Activated naive CD4-positive, alpha-beta T cell treated with anti-CD3 and anti-CD28 coated beads, Interleukin-2, amount 10 ng/mL, durations not matched to agents 7 days and 5 days (primary cell): ENCODE measurements at regions of chr9 and their contacts with region 1.

Region 1: GRCh38 chr9:136482793-136483588 is at the start of gene SEC16A:
- DNase-seq: peak; percentile 100
- H3K4me3 Mint-ChIP-seq: peak within 1 kb of the TSS; percentile 98
- H3K27ac Mint-ChIP-seq: peak within 1 kb of the TSS; percentile 99
- H3K4me1 Mint-ChIP-seq: peaks cover 30% of the 10 kb centered on the region
- H3K27me3 Mint-ChIP-seq: peaks cover 22% of the 10 kb centered on the region

Region 2: GRCh38 chr9:136118320-136119060 is 364.5 kb before region 1 on chr9 and contains the start of gene TMEM250:
- CTCF ChIA-PET with region 1: no interaction called
- DNase-seq: peak; percentile 97
- H3K4me3 Mint-ChIP-seq: peak within 1 kb of the TSS; percentile 79
- H3K27ac Mint-ChIP-seq: peak within 1 kb of the TSS; percentile 89
- H3K4me1 Mint-ChIP-seq: peaks cover 35% of the 10 kb centered on the region
- H3K27me3 Mint-ChIP-seq: peaks cover 11% of the 10 kb centered on the region

Region 3: GRCh38 chr9:136539427-136540421 is 56.7 kb after region 1 on chr9:
- CTCF ChIA-PET with region 1: interaction called, 12 read pairs
- DNase-seq: peak; percentile 98
- H3K4me3 Mint-ChIP-seq: peak overlapping the region; percentile 76
- H3K27ac Mint-ChIP-seq: peak overlapping the region; percentile 100
- H3K4me1 Mint-ChIP-seq: peaks cover 77% of the 10 kb centered on the region
- H3K27me3 Mint-ChIP-seq: no peaks in the 10 kb centered on the region

Region 4: GRCh38 chr9:136631038-136632000 is 148.3 kb after region 1 on chr9:
- CTCF ChIA-PET with region 1: interaction called, 166 read pairs
- DNase-seq: peak; percentile 86
- H3K4me3 Mint-ChIP-seq: no peak overlapping the region
- H3K27ac Mint-ChIP-seq: no peak overlapping the region
- H3K4me1 Mint-ChIP-seq: no peaks in the 10 kb centered on the region
- H3K27me3 Mint-ChIP-seq: peaks cover 41% of the 10 kb centered on the region

Region 5: GRCh38 chr9:136644598-136645351 is 161.8 kb after region 1 on chr9:
- CTCF ChIA-PET with region 1: interaction called, 28 read pairs
- DNase-seq: no peak
- H3K4me3 Mint-ChIP-seq: no peak overlapping the region
- H3K27ac Mint-ChIP-seq: no peak overlapping the region
- H3K4me1 Mint-ChIP-seq: peaks cover 8% of the 10 kb centered on the region
- H3K27me3 Mint-ChIP-seq: peaks cover 90% of the 10 kb centered on the region